ENCODE measurements at regions of chr7 and their contacts with region 1.

Region 1: DNA sequence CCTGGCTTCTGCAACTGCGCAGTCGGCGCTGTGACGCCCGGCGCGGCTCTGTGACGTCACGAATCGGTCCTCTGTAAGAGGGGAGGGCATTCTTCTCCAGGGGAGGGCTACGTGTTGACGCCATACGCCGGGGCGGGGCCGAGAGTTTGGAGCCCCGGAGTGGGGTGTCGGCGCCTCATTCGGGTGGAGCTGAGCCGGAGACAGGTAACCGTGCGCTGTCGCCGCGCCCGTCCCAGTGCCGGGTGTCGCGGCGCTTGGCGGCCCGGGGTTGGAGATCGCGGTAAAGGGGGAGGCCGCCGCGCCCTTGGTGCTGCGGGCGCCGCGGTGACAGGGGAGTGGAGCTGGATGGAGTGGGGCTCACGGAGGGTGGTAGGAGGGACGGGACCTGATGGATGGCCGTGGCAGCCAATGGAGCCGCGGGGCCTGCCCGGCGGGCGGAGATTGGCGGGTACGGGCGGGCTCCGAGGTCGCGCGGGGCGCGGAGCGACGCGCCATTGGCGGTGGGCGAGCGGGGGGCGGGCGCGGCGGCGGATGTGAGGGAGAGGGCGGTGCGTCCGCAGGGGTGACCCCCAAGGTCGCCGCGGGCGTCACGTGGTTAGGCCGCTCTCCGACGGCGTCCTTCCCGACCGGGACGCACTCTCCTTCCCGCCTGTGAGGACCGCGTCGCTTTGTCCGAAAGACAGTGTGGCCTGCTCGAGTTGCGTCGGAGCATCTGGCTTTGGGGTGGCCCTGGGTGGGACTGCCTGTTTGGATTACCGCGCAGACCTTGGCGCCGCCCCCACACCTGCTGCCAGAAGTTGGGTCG is at the start of gene OGDH:
- DNase-seq: peak; percentile 98
- H3K4me3 Mint-ChIP-seq: peak within 1 kb of the TSS; percentile 97
- H3K27ac Mint-ChIP-seq: peak within 1 kb of the TSS; percentile 99
- H3K4me1 Mint-ChIP-seq: peaks cover 9% of the 10 kb centered on the region
- H3K27me3 Mint-ChIP-seq: no peaks in the 10 kb centered on the region
- CTCF ChIP-seq: no peak
- total RNA-seq, gene OGDH: 75.1 and 91.1 TPM in 2 replicates

Region 2: GRCh38 chr7:44145969-44146911 is 460.4 kb before region 1 on chr7:
- CTCF ChIA-PET with region 1: no interaction called
- POLR2A ChIA-PET with region 1: no interaction called
- intact Hi-C with region 1: no loop called
- DNase-seq: peak; percentile 29
- H3K4me3 Mint-ChIP-seq: no peak overlapping the region
- H3K27ac Mint-ChIP-seq: no peak overlapping the region
- H3K4me1 Mint-ChIP-seq: no peaks in the 10 kb centered on the region
- H3K27me3 Mint-ChIP-seq: no peaks in the 10 kb centered on the region
- CTCF ChIP-seq: no peak

Region 3: DNA sequence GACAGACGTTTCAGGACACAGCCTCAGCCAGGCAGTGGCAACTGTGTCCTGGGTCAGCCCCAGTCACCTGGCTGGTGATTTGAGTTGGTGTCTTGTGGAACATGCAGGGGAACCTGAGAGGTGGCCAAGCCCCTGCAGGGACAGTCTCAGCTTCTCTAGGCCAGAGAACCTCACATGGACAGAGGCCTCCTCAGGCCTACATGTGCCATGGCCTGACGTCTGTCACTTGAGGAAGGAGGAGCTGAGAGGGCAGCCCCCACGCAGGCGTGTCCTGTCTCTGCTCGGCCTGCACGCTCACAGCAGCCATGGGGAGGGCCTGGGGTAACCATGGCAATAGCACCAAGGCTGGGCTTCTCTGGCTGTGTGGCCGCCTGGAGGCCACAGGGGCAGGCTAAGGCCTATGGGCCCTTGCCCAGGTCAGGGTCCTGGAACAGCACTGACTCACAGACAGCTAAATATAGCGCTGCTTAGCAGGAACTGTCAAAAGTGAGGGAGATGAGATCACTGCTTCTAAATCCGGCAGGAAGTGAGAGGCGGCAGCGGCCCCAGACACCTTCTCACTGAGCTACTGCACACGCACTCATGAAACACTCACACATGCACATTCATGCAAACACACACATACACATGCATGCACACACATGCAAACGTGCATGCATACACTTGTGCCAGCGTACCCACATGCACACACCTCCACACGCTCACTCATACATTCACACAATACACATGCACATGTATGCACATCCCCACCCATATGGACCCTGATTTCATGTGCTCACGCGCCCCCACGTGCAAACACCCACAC is 348.8 kb before region 1 on chr7:
- CTCF ChIA-PET with region 1: no interaction called
- POLR2A ChIA-PET with region 1: no interaction called
- intact Hi-C with region 1: no loop called
- DNase-seq: peak; percentile 91
- H3K4me3 Mint-ChIP-seq: no peak overlapping the region
- H3K27ac Mint-ChIP-seq: no peak overlapping the region
- H3K4me1 Mint-ChIP-seq: peaks cover 29% of the 10 kb centered on the region
- H3K27me3 Mint-ChIP-seq: no peaks in the 10 kb centered on the region
- CTCF ChIP-seq: no peak

Region 4: DNA sequence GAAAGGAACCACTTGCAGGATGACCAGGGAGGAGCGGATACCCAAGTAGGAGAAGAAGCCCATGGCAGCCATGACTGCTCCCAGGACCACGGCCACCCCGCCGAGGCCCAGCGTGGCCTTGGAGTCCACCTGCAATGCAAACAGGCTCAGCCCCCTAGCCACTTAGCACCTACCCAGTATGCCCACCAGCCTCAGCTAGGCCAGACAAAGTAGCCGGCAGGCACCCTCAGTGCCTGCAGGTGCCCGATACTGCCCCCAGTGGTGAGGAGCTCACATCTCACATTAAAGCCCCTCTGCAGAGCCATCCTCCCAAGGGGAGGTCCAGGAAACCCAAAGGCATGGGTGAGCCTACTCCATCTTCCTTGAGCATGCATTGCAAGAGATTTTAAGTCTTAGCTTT is 72.2 kb before region 1 on chr7:
- CTCF ChIA-PET with region 1: no interaction called
- POLR2A ChIA-PET with region 1: no interaction called
- intact Hi-C with region 1: no loop called
- DNase-seq: peak; percentile 62
- H3K4me3 Mint-ChIP-seq: no peak overlapping the region
- H3K27ac Mint-ChIP-seq: no peak overlapping the region
- H3K4me1 Mint-ChIP-seq: peaks cover 9% of the 10 kb centered on the region
- H3K27me3 Mint-ChIP-seq: no peaks in the 10 kb centered on the region
- CTCF ChIP-seq: peak; percentile 53

Region 5: GRCh38 chr7:44581879-44582603 is 24.6 kb before region 1 on chr7 and contains the start of gene TMED4:
- CTCF ChIA-PET with region 1: no interaction called
- POLR2A ChIA-PET with region 1: interaction called, 46 read pairs
- intact Hi-C with region 1: no loop called
- DNase-seq: peak; percentile 99
- H3K4me3 Mint-ChIP-seq: peak within 1 kb of the TSS; percentile 85
- H3K27ac Mint-ChIP-seq: peak within 1 kb of the TSS; percentile 93
- H3K4me1 Mint-ChIP-seq: peaks cover 6% of the 10 kb centered on the region
- H3K27me3 Mint-ChIP-seq: no peaks in the 10 kb centered on the region
- CTCF ChIP-seq: no peak
- total RNA-seq, gene TMED4: 49.7 and 58.0 TPM in 2 replicates

Region 6: DNA sequence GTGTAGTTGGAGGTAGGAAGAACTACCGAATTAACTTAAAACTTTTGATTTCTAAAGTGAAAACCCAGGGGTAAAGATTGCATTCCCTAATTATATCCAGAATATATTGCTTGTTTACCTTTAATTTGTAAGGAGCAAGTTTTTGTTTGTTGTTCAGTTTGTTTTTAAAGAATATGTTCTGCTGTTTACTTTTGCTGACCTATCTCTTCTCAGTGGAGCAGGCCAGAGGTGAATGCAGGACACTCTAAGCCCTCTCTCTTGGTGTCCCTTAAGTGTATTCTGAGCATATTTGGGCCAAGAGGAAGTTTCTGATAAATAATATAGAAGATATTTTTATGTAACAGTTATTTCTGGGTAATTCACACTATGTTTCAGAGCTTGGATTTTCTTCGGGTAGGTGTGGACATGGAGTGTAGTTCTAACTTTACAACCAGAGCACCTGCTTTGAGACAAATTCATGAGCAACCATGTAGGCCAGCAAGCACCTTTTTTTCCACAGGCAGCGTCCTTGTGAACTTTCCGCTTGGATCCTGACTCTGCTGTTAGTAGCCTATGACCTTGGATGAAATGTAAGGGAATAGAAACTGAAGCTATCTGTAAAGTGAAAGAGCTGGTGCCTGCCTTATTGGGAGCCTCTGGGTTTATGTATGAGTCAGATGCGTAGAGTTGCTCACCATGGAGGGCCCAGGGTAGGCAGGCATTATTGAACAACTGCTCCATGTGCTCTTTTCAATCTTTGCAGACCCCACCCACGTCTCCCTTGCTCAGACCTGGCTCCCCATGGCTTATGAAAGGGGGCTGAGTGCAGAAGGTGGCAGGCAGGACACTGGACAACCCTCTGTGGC is 15.9 kb after region 1 on chr7:
- CTCF ChIA-PET with region 1: interaction called, 3 read pairs
- POLR2A ChIA-PET with region 1: interaction called, 23 read pairs
- intact Hi-C with region 1: no loop called
- DNase-seq: no peak
- H3K4me3 Mint-ChIP-seq: no peak overlapping the region
- H3K27ac Mint-ChIP-seq: no peak overlapping the region
- H3K4me1 Mint-ChIP-seq: peaks cover 26% of the 10 kb centered on the region
- H3K27me3 Mint-ChIP-seq: no peaks in the 10 kb centered on the region
- CTCF ChIP-seq: no peak

Region 7: GRCh38 chr7:44665531-44666213 is 59.0 kb after region 1 on chr7:
- CTCF ChIA-PET with region 1: no interaction called
- POLR2A ChIA-PET with region 1: interaction called, 13 read pairs
- intact Hi-C with region 1: no loop called
- DNase-seq: peak; percentile 16
- H3K4me3 Mint-ChIP-seq: no peak overlapping the region
- H3K27ac Mint-ChIP-seq: peak overlapping the region; percentile 69
- H3K4me1 Mint-ChIP-seq: peaks cover 14% of the 10 kb centered on the region
- H3K27me3 Mint-ChIP-seq: no peaks in the 10 kb centered on the region
- CTCF ChIP-seq: no peak

Region 8: DNA sequence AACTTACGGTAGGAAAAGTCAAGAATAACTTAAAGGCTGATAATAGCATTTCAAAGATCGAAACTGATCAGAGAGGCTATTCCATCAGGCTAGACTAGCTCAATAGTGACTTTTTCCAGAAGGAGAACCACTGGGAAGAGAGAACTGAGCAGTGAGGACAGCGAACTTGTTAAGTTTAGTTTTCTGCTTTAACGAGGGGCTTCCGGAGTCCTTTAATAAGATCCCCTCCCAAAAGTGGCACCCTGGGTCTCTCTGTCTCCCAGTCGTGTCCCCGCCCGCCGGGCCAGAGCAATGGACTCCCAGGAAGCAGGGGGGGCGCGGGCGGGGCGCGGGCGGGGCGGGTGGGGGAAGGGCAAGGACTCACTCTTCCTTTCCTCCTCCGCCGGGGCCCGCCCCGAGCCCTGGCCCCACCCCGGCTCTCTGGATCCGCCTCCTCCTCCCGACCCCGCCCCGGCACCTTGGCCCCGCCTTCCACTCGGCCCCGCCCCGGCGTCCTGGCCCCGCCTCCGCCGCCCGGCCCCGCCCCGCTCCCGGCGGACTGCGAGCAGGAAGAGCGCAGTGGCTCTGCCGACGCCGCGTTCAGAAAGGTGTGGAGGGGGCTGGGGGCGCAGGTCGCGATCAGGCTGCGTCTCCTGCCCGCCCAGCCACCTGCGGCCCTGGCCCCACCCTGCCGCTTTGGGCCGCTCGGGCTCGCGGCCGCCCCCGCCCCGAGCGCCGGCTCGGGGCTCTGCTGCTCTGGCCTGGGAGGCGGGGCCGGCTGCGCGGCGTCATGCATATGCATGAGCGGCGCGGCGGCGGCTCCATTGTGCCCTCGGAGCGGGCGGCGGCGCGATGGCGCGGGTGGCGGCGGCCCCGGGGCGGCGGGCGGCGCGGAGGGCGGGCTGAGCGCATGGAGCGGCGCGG is 141.6 kb after region 1 on chr7 and contains the start of gene ZMIZ2:
- CTCF ChIA-PET with region 1: no interaction called
- POLR2A ChIA-PET with region 1: interaction called, 30 read pairs
- intact Hi-C with region 1: loop called (anchors 5 kb)
- DNase-seq: peak; percentile 84
- H3K4me3 Mint-ChIP-seq: peak within 1 kb of the TSS; percentile 74
- H3K27ac Mint-ChIP-seq: peak within 1 kb of the TSS; percentile 29
- H3K4me1 Mint-ChIP-seq: peaks cover 26% of the 10 kb centered on the region
- H3K27me3 Mint-ChIP-seq: no peaks in the 10 kb centered on the region
- CTCF ChIP-seq: no peak
- total RNA-seq, gene ZMIZ2: 94.4 and 100 TPM in 2 replicates

Measured in MCF 10A (cell line).